Activated CD4-positive, alpha-beta memory T cell treated with anti-CD3 and anti-CD28 coated beads, Interleukin-2, amount 10 ng/mL, durations not matched to agents 7 days and 5 days (primary cell): ENCODE measurements at regions of chr1 and their contacts with region 1.

Region 1: GRCh38 chr1:22052115-22053016 is at the start of gene CDC42:
- DNase-seq: peak; percentile 98
- H3K4me3 Mint-ChIP-seq: peak within 1 kb of the TSS; percentile 100
- H3K27ac Mint-ChIP-seq: peak within 1 kb of the TSS; percentile 99
- H3K4me1 Mint-ChIP-seq: peaks cover 63% of the 10 kb centered on the region
- H3K27me3 Mint-ChIP-seq: no peaks in the 10 kb centered on the region
- total RNA-seq, gene CDC42: 377 to 388 TPM

Region 2: DNA sequence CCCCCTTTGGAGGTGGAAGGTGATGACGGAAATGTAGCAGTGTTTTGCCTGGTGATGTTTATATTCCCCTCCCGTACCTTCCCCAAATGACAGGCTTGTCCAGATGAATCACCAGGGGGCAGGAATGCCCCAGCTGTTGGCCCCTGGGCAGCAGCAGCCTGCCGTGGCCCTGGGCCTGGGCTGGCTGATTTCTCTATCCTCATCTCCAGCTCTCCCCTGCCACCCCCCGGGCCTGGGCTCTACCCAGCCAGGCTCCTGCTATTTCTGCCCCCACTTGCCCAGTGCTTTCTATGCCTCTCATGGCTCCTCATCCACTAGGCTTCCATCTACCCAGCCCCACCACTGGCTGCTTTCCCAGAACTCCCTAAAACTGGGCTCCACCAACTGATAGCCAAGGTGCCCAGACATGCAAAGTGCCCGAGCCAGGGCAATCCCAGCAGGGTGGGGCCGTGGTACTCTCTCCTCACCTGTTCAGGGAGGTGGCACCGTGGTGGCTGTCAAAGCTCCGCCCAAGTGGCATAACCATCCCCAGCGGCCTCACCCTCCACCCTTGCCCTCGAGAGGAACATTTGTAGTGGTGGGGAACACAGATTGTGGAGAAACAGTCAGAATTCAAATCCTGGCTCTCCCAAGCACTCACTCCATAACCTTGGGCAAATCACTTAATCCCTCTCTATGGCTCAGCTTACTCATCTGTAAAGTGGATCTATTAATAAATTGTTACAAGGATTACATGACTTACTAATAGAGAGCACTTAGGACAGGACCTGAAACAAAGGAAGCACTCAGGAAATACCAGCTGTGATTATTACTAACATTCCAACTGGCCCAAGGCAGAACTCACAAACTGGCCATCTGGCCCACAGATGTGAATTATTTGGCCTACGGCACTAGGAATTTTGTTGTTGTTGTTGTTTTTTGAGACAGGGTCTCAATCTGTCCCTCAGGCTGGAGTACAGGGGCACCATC is 749.3 kb before region 1 on chr1:
- CTCF ChIA-PET with region 1: no interaction called
- POLR2A ChIA-PET with region 1: no interaction called
- DNase-seq: no peak
- H3K4me3 Mint-ChIP-seq: no peak overlapping the region
- H3K27ac Mint-ChIP-seq: no peak overlapping the region
- H3K4me1 Mint-ChIP-seq: peaks cover 59% of the 10 kb centered on the region
- H3K27me3 Mint-ChIP-seq: no peaks in the 10 kb centered on the region

Region 3: GRCh38 chr1:21782868-21783678 is 269.3 kb before region 1 on chr1 and contains the start of gene USP48:
- CTCF ChIA-PET with region 1: no interaction called
- POLR2A ChIA-PET with region 1: interaction called, 13 read pairs
- DNase-seq: peak; percentile 98
- H3K4me3 Mint-ChIP-seq: peak within 1 kb of the TSS; percentile 87
- H3K27ac Mint-ChIP-seq: peak within 1 kb of the TSS; percentile 100
- H3K4me1 Mint-ChIP-seq: peaks cover 30% of the 10 kb centered on the region
- H3K27me3 Mint-ChIP-seq: peaks cover 5% of the 10 kb centered on the region
- total RNA-seq, gene USP48: 80.1 to 81.8 TPM

Region 4: DNA sequence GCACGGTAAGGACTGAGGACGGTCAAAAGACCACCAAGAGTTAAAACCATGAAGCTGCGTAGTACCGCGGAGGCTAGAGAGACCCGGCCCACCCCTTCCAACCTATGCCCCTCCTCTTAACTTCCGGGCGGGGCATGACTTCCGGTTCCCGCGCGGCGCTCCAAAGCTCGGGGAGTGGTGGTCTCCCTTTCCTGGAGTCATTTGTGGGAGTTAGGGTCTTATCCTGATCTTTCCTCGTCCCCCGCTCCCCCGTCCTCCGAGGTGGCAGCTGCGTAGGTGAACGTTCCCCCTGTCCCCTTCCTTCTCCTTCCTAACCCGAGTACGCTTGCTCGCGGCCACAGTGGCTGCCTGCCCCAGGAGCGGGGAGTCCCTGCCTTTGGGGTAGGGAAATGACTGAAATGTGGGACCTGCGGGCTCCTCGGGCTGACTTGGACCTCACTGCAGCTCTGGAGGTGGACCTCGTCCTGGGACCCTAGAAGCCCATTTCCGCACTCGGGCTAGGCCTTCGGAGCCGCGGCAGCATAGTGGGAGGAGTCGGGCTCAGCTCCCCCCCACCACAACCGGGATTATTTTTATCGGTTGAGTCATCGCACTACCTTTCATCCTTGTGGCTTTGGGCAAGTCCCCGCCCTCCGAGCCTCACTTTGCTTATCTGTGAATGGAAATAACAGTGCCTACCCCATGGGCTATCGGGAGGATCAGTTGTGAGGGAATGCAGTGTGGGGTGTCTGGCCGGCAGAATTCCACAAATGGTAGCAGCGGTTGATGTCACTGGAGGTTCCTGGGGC is 26.8 kb before region 1 on chr1:
- CTCF ChIA-PET with region 1: interaction called, 112 read pairs
- POLR2A ChIA-PET with region 1: interaction called, 1,616 read pairs
- DNase-seq: peak; percentile 90
- H3K4me3 Mint-ChIP-seq: peak overlapping the region; percentile 86
- H3K27ac Mint-ChIP-seq: peak overlapping the region; percentile 93
- H3K4me1 Mint-ChIP-seq: peaks cover 55% of the 10 kb centered on the region
- H3K27me3 Mint-ChIP-seq: no peaks in the 10 kb centered on the region

Region 5: GRCh38 chr1:22064751-22065402 is 12.5 kb after region 1 on chr1:
- CTCF ChIA-PET with region 1: interaction called, 7 read pairs
- POLR2A ChIA-PET with region 1: interaction called, 1,616 read pairs
- DNase-seq: no peak
- H3K4me3 Mint-ChIP-seq: no peak overlapping the region
- H3K27ac Mint-ChIP-seq: no peak overlapping the region
- H3K4me1 Mint-ChIP-seq: peaks cover 75% of the 10 kb centered on the region
- H3K27me3 Mint-ChIP-seq: no peaks in the 10 kb centered on the region

Region 6: DNA sequence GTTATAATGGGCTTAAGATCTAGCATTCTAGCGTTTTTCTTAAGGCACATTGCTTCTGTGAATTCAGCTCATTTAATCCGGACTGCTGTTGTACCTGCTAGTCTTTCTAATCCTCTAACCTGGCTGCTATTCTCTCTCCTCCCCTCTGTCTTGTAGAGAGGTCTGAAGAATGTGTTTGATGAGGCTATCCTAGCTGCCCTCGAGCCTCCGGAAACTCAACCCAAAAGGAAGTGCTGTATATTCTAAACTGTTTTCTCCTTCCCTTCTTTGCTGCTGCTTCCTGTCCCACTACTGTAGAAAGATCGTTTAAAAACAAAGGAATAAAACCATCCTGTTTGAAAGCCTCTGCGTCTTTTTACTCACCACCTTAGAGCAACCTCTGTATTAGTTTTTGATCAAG is 37.4 kb after region 1 on chr1:
- CTCF ChIA-PET with region 1: interaction called, 9 read pairs
- POLR2A ChIA-PET with region 1: interaction called, 37 read pairs
- DNase-seq: no peak
- H3K4me3 Mint-ChIP-seq: peak overlapping the region; percentile 63
- H3K27ac Mint-ChIP-seq: peak overlapping the region; percentile 79
- H3K4me1 Mint-ChIP-seq: peaks cover 87% of the 10 kb centered on the region
- H3K27me3 Mint-ChIP-seq: no peaks in the 10 kb centered on the region

Region 7: GRCh38 chr1:22105611-22106207 is 53.3 kb after region 1 on chr1:
- CTCF ChIA-PET with region 1: interaction called, 10 read pairs
- POLR2A ChIA-PET with region 1: interaction called, 6 read pairs
- DNase-seq: no peak
- H3K4me3 Mint-ChIP-seq: no peak overlapping the region
- H3K27ac Mint-ChIP-seq: peak overlapping the region; percentile 85
- H3K4me1 Mint-ChIP-seq: peaks cover 56% of the 10 kb centered on the region
- H3K27me3 Mint-ChIP-seq: no peaks in the 10 kb centered on the region

Region 8: GRCh38 chr1:22296701-22297591 is 244.6 kb after region 1 on chr1:
- CTCF ChIA-PET with region 1: no interaction called
- POLR2A ChIA-PET with region 1: no interaction called
- DNase-seq: no peak
- H3K4me3 Mint-ChIP-seq: no peak overlapping the region
- H3K27ac Mint-ChIP-seq: no peak overlapping the region
- H3K4me1 Mint-ChIP-seq: peaks cover 6% of the 10 kb centered on the region
- H3K27me3 Mint-ChIP-seq: peaks cover 52% of the 10 kb centered on the region